Sciatic nerve (tissue), 2 donors: ENCODE measurements at regions of chr20 and their contacts with region 1.

Region 1: DNA sequence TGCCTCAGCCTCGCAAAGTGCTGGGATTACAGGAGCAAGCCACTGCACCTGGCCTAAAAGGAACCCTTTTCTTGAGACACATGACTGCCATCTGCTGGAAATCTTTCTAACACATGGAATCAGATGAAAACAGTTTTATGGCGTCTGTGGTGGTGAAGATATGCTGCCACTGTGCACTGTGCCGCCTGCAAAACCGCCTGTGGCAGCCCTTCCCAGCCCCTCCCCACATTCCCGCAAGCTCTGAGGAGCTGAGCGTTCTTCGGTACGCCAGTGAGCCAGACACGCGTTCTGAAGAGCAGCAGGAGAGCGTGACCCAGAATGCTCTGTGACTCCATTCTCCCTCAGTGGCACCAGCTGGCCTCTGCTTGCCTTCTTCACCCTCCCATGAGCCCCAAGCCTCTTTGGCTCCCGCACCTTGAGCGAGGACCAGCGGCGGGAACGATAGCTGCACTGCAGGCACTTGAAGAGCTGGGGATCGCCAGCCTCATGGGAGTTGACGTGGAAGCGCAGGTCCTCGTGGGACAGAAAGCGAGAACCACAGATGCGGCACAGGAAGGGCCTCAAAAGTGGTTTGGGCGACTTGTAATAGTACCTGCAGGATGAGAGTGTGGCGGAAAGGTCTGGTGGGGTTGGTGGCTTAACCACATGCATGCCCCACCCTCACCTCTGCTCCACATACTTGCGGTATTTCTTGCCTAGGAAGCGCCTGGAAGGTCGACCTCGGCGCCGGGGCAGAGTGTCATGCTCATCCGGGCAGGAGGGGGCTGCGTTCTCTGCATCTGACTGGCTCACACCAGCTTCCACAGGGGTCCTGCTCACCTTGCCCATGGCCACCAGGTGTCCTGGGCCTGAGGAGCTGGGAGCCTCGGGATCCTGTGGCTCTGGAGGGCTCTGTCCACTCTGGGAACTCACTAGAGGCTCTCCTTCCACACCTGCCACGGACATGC is 8.7 kb downstream of the ZNF335 start:
- DNase-seq: peak; percentile 59
- ATAC-seq: peak; percentile 11

Region 2: GRCh38 chr20:45890985-45891983 is 72.0 kb before region 1 on chr20 and contains the starts of genes CTSA and NEURL2:
- intact Hi-C with region 1: loop called (anchors 10 kb)
- DNase-seq: peak; percentile 97
- ATAC-seq: peak; percentile 93
- total RNA-seq, gene CTSA: 87.4 TPM
- total RNA-seq, gene NEURL2: 8.9 TPM

Region 3: DNA sequence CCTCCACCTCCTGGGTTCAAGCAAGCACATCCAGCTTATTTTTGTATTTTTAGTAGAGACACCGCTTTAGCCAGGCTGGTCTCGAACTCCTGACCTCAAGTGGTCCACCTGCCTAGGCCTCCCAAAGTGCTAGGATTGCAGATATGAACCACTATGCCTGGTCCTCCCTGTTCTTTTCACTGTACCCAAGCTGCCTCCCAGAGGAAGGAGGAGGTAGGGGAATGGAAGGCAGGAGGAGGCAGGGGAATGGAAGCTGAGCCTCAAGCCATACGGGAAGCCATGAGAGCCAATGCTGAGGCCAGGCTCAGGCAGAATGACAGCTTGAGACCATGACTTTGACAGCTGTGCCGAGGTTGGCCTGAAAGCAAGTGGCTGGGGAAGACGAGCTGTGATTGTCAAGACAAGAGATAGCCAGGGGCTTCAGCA is 22.2 kb after region 1 on chr20:
- intact Hi-C with region 1: loop called (anchors 1 kb)
- DNase-seq: no peak
- ATAC-seq: no peak